Sciatic nerve (tissue), 2 donors: ENCODE measurements at regions of chr12 and their contacts with region 1.

Region 1: GRCh38 chr12:2930865-2931264 is 28.3 kb upstream of the TEAD4 start:
- DNase-seq: no peak
- ATAC-seq: no peak

Region 2: GRCh38 chr12:2783936-2784600 is 146.8 kb before region 1 on chr12:
- intact Hi-C with region 1: no loop called
- DNase-seq: peak; percentile 80
- ATAC-seq: peak; percentile 96

Region 3: DNA sequence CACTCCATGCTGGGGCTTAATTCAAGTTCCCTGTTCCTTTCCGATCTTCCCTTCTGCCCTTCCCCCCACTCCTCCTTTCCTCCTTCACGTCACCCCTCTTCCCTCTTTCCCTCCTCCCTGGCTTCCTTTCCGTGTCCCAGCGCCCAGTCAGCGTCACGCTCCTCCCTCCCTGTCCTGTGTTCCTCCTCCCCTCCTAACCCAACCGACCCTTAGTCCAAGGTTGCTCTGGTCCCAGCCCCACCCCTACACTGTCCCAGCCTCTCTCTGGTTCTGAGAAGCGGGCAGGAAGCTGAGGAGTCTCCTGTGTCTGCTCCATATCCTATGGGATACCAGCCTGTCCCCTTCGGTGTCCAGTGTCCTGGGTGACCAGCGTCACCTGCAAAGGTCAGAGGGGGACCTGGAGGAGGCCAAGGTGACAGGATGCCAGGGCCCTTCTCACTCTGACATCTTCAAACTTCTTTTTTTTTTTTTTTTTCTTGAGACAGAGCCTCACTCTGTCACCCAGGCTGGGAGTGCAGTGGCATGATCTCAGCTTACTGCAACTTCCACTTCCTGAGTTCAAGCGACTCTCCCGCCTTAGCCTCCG is 90.1 kb after region 1 on chr12:
- intact Hi-C with region 1: no loop called
- DNase-seq: no peak
- ATAC-seq: no peak

Region 4: GRCh38 chr12:3869865-3870264 is 939.0 kb after region 1 on chr12:
- intact Hi-C with region 1: loop called (anchors 5 kb)
- DNase-seq: no peak
- ATAC-seq: no peak